IMR-90 (cell line): ENCODE measurements at regions of chr17 and their contacts with region 1.

Region 1: GRCh38 chr17:29219378-29220047 is 27.1 kb upstream of the CRYBA1 start:
- DNase-seq: peak; percentile 83
- ATAC-seq: peak; percentile 98
- H3K4me3 ChIP-seq: no peak overlapping the region
- H3K27ac ChIP-seq: no peak overlapping the region
- H3K4me1 ChIP-seq: no peaks in the 10 kb centered on the region; the same call in 1 of the 2 replicates
- H3K27me3 ChIP-seq: no peaks in the 10 kb centered on the region
- CTCF ChIP-seq: peak; percentile 98
- POLR2A ChIP-seq: no peak
- RAD21 ChIP-seq: peak; percentile 76

Region 2: GRCh38 chr17:28216528-28216927 is 1003.0 kb before region 1 on chr17:
- CTCF ChIA-PET with region 1: no interaction called
- POLR2A ChIA-PET with region 1: no interaction called
- dilution Hi-C with region 1: no loop called
- in situ Hi-C with region 1: no loop called
- intact Hi-C with region 1: no loop called
- DNase-seq: peak; percentile 49
- ATAC-seq: peak; percentile 82; the same call in 1 of the 2 replicates
- H3K4me3 ChIP-seq: no peak overlapping the region
- H3K27ac ChIP-seq: no peak overlapping the region
- H3K4me1 ChIP-seq: no peaks in the 10 kb centered on the region
- H3K27me3 ChIP-seq: no peaks in the 10 kb centered on the region
- CTCF ChIP-seq: no peak
- POLR2A ChIP-seq: no peak
- RAD21 ChIP-seq: no peak

Region 3: GRCh38 chr17:28937044-28937729 is 282.3 kb before region 1 on chr17:
- CTCF ChIA-PET with region 1: no interaction called
- POLR2A ChIA-PET with region 1: no interaction called
- dilution Hi-C with region 1: no loop called
- in situ Hi-C with region 1: no loop called
- intact Hi-C with region 1: no loop called
- DNase-seq: peak; percentile 41
- ATAC-seq: no peak; the same call in 1 of the 2 replicates
- H3K4me3 ChIP-seq: no peak overlapping the region
- H3K27ac ChIP-seq: no peak overlapping the region
- H3K4me1 ChIP-seq: peaks cover 18% of the 10 kb centered on the region
- H3K27me3 ChIP-seq: no peaks in the 10 kb centered on the region
- CTCF ChIP-seq: no peak
- POLR2A ChIP-seq: no peak
- RAD21 ChIP-seq: no peak

Region 4: GRCh38 chr17:29059281-29059680 is 160.2 kb before region 1 on chr17:
- CTCF ChIA-PET with region 1: no interaction called
- POLR2A ChIA-PET with region 1: no interaction called
- dilution Hi-C with region 1: no loop called
- in situ Hi-C with region 1: no loop called
- intact Hi-C with region 1: no loop called
- DNase-seq: peak; percentile 77
- ATAC-seq: peak; percentile 80
- H3K4me3 ChIP-seq: no peak overlapping the region
- H3K27ac ChIP-seq: no peak overlapping the region
- H3K4me1 ChIP-seq: no peaks in the 10 kb centered on the region
- H3K27me3 ChIP-seq: peaks cover 44% of the 10 kb centered on the region
- CTCF ChIP-seq: no peak
- POLR2A ChIP-seq: no peak
- RAD21 ChIP-seq: no peak

Region 5: GRCh38 chr17:29124117-29124924 is 95.2 kb before region 1 on chr17:
- CTCF ChIA-PET with region 1: interaction called, 10 read pairs
- POLR2A ChIA-PET with region 1: no interaction called
- dilution Hi-C with region 1: no loop called
- in situ Hi-C with region 1: no loop called
- intact Hi-C with region 1: loop called (anchors 1 kb)
- DNase-seq: peak; percentile 82
- ATAC-seq: peak; percentile 98
- H3K4me3 ChIP-seq: no peak overlapping the region
- H3K27ac ChIP-seq: no peak overlapping the region
- H3K4me1 ChIP-seq: no peaks in the 10 kb centered on the region
- H3K27me3 ChIP-seq: no peaks in the 10 kb centered on the region
- CTCF ChIP-seq: peak; percentile 95
- POLR2A ChIP-seq: no peak
- RAD21 ChIP-seq: peak; percentile 95

Region 6: GRCh38 chr17:29180034-29180787 is 39.3 kb before region 1 on chr17 and contains the start of gene MYO18A:
- CTCF ChIA-PET with region 1: interaction called, 5 read pairs
- POLR2A ChIA-PET with region 1: no interaction called
- dilution Hi-C with region 1: no loop called
- in situ Hi-C with region 1: no loop called
- intact Hi-C with region 1: loop called (anchors 1 kb)
- DNase-seq: peak; percentile 71
- ATAC-seq: peak; percentile 94
- H3K4me3 ChIP-seq: peak within 1 kb of the TSS; percentile 79
- H3K27ac ChIP-seq: peak within 1 kb of the TSS; percentile 84
- H3K4me1 ChIP-seq: peaks cover 29% of the 10 kb centered on the region
- H3K27me3 ChIP-seq: no peaks in the 10 kb centered on the region
- CTCF ChIP-seq: peak; percentile 98
- POLR2A ChIP-seq: no peak
- RAD21 ChIP-seq: peak; percentile 71
- total RNA-seq, gene MYO18A: 39.1 and 40.0 TPM in 2 replicates

Region 7: DNA sequence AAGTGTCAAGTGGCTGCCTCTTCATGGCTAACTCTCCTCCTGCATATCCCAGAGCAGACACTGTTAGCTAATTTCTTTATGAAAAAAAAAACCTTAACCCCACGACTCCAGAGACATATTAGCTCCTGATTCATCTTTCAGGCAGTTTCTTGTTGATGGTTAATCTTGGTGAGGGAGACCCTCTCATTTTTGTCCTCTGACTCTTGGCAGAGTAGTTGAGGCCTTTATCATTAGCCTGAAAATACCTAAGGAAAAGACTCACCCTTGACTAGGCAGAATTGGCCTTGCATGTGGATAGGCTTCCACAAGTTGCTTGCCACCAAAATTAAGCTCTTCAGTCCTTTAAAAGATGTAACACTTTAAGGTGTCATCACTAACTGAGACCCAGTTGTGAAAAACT is 31.2 kb after region 1 on chr17:
- CTCF ChIA-PET with region 1: interaction called, 10 read pairs
- POLR2A ChIA-PET with region 1: no interaction called
- dilution Hi-C with region 1: no loop called
- in situ Hi-C with region 1: no loop called
- intact Hi-C with region 1: no loop called
- DNase-seq: peak; percentile 93
- ATAC-seq: peak; percentile 76
- H3K4me3 ChIP-seq: no peak overlapping the region
- H3K27ac ChIP-seq: peak overlapping the region; percentile 53
- H3K4me1 ChIP-seq: peaks cover 18% of the 10 kb centered on the region
- H3K27me3 ChIP-seq: no peaks in the 10 kb centered on the region
- CTCF ChIP-seq: no peak
- POLR2A ChIP-seq: no peak
- RAD21 ChIP-seq: no peak; the same call in 1 of the 2 replicates

Region 8: GRCh38 chr17:29293890-29294579 is 74.5 kb after region 1 on chr17 and contains the start of gene NUFIP2:
- CTCF ChIA-PET with region 1: interaction called, 5 read pairs
- POLR2A ChIA-PET with region 1: no interaction called
- dilution Hi-C with region 1: no loop called
- in situ Hi-C with region 1: no loop called
- intact Hi-C with region 1: loop called (anchors 1 kb)
- DNase-seq: peak; percentile 98
- ATAC-seq: peak; percentile 90
- H3K4me3 ChIP-seq: peak within 1 kb of the TSS; percentile 70
- H3K27ac ChIP-seq: peak within 1 kb of the TSS; percentile 93
- H3K4me1 ChIP-seq: no peaks in the 10 kb centered on the region
- H3K27me3 ChIP-seq: no peaks in the 10 kb centered on the region
- CTCF ChIP-seq: no peak
- POLR2A ChIP-seq: peak; percentile 100
- RAD21 ChIP-seq: no peak
- total RNA-seq, gene NUFIP2: 25.6 and 38.9 TPM in 2 replicates